BJ (cell line): ENCODE measurements at regions of chr3 and their contacts with region 1.

Region 1: GRCh38 chr3:152444029-152444641 is 175.4 kb downstream of the MBNL1 start:
- DNase-seq: peak; percentile 21
- H3K4me3 ChIP-seq: no peak overlapping the region
- H3K27me3 ChIP-seq: no peaks in the 10 kb centered on the region
- CTCF ChIP-seq: peak; percentile 55

Region 2: DNA sequence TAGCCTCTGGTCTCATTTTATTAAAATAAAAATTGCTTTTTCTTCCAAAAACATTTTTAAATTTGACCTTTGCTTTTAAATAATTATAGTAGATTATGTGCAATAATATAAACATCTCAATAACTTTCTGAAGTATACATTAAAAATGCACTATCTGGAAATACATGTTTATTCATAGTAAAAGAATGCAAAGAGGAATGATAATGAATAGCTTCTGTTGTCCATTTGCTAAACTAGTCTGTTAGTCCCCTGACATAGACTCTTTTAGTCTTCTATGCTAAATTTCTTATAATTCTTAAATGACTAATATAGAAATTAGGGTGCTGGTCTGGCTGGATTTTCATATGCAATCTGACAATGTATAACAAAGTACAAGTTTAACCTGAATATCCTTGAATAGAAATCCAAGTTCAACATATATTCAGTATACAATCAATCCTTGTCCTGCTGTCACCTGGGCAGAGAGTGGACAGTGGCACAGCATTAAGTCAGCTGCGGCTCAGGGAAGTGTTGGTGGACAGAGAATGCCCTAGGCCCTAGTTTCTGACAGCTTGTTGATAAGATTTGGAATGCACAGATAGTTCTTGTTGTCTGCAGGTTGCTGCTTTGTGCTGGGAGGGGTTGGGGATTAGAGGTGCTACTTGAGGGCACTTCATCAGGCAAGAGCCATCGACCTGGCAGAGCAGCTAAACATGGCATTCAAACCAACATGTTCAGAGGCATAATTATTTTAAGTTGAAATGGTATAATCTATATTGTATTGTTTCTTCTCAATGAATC is 13.7 kb before region 1 on chr3:
- CTCF ChIA-PET with region 1: interaction called, 12 read pairs
- POLR2A ChIA-PET with region 1: no interaction called
- DNase-seq: no peak
- H3K4me3 ChIP-seq: no peak overlapping the region
- H3K27me3 ChIP-seq: no peaks in the 10 kb centered on the region
- CTCF ChIP-seq: no peak